ENCODE measurements at regions of chr2 and their contacts with region 1.

Region 1: DNA sequence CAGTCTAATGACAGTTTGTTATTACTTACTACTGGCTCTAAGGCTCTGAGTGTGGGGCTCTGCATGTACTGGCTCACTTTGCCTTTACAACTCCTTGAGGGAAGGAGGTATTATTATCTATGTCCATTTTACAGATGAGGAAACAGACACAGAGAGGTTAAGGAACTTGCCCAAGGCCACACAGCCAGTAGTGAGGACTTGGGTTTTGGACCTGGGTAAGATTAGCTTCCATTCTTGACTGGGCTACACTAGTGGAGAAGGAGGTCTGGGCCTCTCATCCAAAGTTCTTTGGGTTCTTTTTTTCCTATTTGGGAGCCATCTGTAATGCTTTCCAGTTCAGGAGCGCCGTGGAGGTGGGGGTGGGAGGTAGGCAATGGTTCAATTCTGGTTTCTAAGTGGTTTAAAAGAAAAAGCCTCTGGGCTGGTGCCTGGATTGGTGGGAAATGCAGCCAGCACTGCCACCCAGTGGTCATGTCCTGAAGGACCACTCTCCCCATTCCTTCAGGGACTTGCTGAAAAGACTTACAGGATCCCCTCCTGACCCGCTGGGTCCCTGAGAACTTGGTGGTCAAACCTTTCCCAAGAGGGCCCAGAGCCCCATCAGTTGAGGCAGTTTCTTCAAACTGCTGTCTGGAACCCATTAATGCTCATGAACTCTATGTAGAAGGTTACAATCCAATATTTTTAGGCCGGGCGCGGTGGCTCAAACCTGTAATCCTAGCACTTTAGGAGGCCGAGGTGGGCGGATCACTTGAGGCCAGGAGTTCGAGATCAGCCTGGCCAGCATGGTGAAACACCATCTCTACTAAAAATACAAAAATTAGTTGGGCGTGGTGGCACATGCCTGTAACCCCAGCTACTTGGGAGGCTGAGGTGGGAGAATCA is 38.6 kb upstream of the NOTO start:
- DNase-seq: peak in 3 of 4 donors; percentile 39 to 73 (median 45)
- ATAC-seq: peak; percentile 97
- H3K4me3 ChIP-seq: no peak overlapping the region
- H3K27ac ChIP-seq: no peak overlapping the region
- H3K4me1 ChIP-seq: no peaks in the 10 kb centered on the region
- H3K27me3 ChIP-seq: peaks cover 0 to 24% of the 10 kb centered on the region in 2 donors
- CTCF ChIP-seq: peak; percentile 87 to 90

Region 2: DNA sequence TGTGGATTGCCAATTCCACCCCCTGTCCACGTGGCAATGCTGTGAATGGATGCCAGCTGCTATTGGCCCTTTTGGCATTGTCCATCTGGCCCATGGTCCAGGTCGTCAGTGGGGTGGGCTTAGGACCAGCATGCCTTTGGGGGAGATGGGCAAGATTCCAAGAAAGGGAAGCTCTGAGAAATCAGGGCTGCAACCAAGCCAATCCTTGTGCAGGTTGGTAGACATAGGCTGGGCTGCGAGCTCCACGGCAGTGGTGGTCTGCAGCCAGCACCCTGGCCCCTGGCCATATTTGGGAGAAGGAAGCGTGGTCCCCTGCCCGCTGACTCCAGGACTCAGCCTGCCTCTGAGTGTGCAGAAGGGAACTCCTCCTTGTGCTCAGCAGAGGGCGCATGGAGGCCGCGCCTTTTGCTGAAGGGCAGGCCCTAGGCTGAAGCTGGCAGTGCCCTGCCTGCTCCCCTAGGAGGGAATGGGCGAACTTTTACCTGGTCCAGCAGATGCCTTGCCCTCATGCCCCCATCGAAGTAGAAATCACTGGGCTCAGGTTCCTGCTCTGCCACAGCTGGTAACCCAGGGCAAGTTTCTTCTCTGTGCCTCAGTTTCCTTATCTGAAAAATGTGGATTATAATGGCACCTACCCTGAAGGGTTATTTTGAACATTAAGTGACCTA is 271.1 kb before region 1 on chr2:
- intact Hi-C with region 1: loop called in 1 of 2 experiments (anchors 5 kb)
- DNase-seq: peak; percentile 49 to 90 (median 76)
- ATAC-seq: peak; percentile 81
- H3K4me3 ChIP-seq: no peak overlapping the region
- H3K27ac ChIP-seq: no peak overlapping the region
- H3K4me1 ChIP-seq: peaks cover 12 to 32% of the 10 kb centered on the region in 2 donors
- H3K27me3 ChIP-seq: peaks cover 0 to 48% of the 10 kb centered on the region in 2 donors
- CTCF ChIP-seq: peak; percentile 68 to 72

Region 3: DNA sequence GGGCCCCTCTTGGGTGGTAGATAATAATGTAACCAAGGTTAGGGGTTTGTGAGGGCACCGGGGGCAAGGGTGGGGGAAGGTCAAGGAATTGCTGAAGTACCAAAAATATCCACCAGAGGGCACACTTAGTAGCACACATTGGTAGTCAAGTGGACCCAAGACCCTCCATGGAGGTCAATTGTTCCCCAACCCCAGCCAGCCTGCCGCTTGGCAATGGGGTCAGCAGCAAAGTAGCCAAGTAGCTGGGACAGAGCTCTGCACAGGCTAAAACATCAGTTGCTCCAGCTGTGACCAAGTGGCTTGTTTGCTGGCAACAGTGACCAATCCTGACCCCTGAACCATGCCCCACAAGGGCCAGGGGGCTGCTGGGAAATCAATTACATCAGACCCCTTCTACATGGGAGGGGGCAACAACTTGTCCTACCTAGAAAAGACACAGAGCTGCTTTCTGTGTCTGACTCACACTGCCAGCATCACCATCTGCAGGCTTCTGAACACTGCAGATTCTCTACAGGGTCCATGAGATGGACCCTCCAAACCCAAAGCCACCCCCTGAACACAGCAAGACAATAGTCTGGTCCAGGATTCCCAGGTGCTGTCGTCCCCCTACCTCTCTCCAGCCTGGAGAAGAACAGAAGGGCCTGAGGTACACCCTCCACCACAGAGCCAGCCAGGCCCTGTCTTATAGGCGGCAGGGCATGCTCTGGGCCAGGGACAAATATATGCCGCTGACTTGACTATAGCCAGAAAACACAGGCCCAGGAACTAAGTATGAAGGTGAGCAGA is 170.4 kb before region 1 on chr2:
- intact Hi-C with region 1: loop called in 1 of 2 experiments (anchors 5 kb)
- DNase-seq: peak in 2 of 4 donors; percentile 12 to 32
- ATAC-seq: peak; percentile 58
- H3K4me3 ChIP-seq: no peak overlapping the region
- H3K27ac ChIP-seq: no peak overlapping the region
- H3K4me1 ChIP-seq: no peaks in the 10 kb centered on the region
- H3K27me3 ChIP-seq: no peaks in the 10 kb centered on the region
- CTCF ChIP-seq: peak; percentile 79 to 84

Region 4: DNA sequence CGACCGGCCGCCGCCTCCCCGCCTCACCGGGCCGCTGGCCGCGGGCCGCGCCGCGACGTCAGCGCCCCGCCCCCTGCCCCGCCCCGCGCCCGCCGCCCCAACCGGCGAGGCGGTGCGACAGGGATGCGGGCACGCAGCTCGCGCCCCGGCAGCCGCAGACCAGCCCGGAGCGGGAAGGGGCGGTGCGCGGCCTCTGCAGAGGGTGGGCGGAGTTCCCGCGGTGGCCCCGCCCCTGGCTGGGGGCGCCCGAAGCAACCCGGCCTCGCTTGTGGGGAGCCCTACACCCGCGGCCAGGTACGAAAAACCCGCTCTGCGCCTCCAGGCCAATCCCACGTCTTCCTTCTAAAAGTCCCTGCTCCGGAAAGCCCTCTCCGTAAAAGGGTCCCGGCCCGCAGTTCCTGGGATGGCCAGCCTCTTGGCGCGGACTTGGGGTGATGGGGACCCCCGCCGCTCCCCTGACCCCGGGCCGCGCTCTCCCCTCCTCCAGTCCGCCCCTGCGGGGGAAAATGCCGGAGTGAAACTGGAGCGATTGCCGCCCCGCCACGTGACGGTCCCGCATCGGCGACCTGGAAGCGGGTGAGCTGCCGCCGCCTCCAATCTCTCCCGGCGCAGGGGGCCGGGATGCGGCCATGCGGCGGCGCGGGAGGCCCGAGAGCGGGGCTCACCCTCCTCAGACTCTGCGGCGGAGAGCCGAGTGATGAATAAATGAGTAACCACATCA is 50.7 kb before region 1 on chr2 and contains the start of gene RAB11FIP5:
- intact Hi-C with region 1: no loop called
- DNase-seq: peak; percentile 49 to 93 (median 79)
- ATAC-seq: peak; percentile 90
- H3K4me3 ChIP-seq: peak within 1 kb of the TSS; percentile 59 to 82
- H3K27ac ChIP-seq: peak within 1 kb of the TSS; percentile 76 to 87
- H3K4me1 ChIP-seq: peaks cover 4 to 31% of the 10 kb centered on the region in 2 donors
- H3K27me3 ChIP-seq: peaks cover 0 to 48% of the 10 kb centered on the region in 2 donors
- CTCF ChIP-seq: no peak
- polyA plus RNA-seq, gene RAB11FIP5: 8.5 to 14.8 (median 13.5) TPM

Region 5: GRCh38 chr2:73314441-73314840 is 150.7 kb after region 1 on chr2:
- intact Hi-C with region 1: no loop called
- DNase-seq: no peak
- ATAC-seq: no peak
- H3K4me3 ChIP-seq: no peak overlapping the region
- H3K27ac ChIP-seq: no peak overlapping the region
- H3K4me1 ChIP-seq: no peaks in the 10 kb centered on the region
- H3K27me3 ChIP-seq: peaks cover 0 to 19% of the 10 kb centered on the region in 2 donors
- CTCF ChIP-seq: no peak

Region 6: GRCh38 chr2:73700131-73700611 is 536.4 kb after region 1 on chr2:
- intact Hi-C with region 1: no loop called
- DNase-seq: peak in 2 of 4 donors; percentile 41 to 77
- ATAC-seq: peak; percentile 69
- H3K4me3 ChIP-seq: no peak overlapping the region
- H3K27ac ChIP-seq: peak overlapping the region in 1 of 2 donors; percentile 13
- H3K4me1 ChIP-seq: peaks cover 0 to 13% of the 10 kb centered on the region in 2 donors
- H3K27me3 ChIP-seq: no peaks in the 10 kb centered on the region
- CTCF ChIP-seq: no peak

Measured in left lung (tissue), 14 donors.